Posterior vena cava (tissue), 2 donors: ENCODE measurements at regions of chr5 and their contacts with region 1.

Region 1: DNA sequence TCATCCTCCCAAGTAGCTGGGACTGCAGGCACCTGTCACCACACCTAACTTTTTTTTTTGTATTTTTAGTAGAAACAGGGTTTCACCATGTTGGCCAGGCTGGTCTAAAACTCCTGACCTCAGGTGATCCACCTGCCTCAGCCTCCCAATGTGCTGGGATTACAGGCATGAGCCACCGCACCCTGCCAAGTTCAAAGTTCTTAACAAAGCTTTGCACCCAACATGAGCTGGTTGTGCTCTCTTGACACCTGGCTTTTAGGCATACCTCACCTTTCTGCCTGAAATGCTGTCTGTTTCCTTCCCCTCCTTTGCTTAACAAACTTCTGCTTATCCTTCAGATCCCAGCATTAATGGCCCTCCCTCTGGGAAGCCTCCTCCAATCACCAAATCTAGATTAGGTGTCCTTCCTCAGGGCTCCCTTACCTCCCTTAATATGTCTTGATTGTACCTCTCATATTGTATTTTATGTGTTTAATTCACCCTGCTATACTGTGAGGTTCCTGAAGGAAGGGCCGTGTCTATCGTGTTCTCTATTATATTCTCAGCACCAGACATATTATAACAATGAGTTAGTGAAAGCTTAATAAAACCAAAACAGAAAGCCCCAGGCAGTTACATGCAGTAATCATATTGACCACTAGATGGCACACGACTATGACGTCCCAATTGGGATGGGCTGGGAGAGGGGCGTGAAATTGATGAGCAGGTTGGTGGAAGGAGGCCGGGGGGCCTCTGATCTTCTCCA is 62.9 kb upstream of the PPARGC1B start:
- DNase-seq: no peak

Region 2: GRCh38 chr5:150486402-150487198 is 819.3 kb after region 1 on chr5:
- intact Hi-C with region 1: loop called in 1 of 2 experiments (anchors 5 kb)
- DNase-seq: peak; percentile 82